Posterior vena cava (tissue), 2 donors: ENCODE measurements at regions of chr17 and their contacts with region 1.

Region 1: GRCh38 chr17:58468944-58469343 is 19.3 kb downstream of the HSF5 start:
- DNase-seq: no peak

Region 2: GRCh38 chr17:57499648-57500049 is 969.3 kb before region 1 on chr17:
- intact Hi-C with region 1: loop called in 1 of 2 experiments (anchors 5 kb)
- DNase-seq: no peak